Keratinocyte (primary cell): ENCODE measurements at regions of chr9 and their contacts with region 1.

Region 1: GRCh38 chr9:110714314-110714713 is 45.7 kb downstream of the MUSK start:
- DNase-seq: no peak
- H3K4me3 ChIP-seq: no peak overlapping the region
- H3K27ac ChIP-seq: no peak overlapping the region
- H3K4me1 ChIP-seq: no peaks in the 10 kb centered on the region
- H3K27me3 ChIP-seq: no peaks in the 10 kb centered on the region
- CTCF ChIP-seq: no peak

Region 2: DNA sequence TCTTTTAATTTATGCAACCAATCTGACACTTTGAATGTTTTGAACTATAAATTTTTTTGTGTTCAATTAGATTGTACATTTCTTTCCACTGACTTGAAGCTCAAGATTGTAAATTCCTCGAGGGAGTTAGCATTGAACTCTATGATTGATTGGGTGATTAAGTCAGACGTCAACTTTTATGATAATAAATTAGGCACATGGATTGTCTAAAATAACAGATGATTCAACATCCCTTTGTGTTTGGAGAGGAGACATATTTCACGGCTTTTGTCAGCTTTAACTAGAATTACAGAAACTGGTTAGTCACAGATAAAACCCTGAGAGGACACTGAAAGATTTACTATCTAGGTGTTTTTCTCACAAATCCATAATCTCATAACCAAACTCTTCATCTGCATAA is 344.0 kb before region 1 on chr9:
- dilution Hi-C with region 1: no loop called
- DNase-seq: peak; percentile 15
- H3K4me3 ChIP-seq: no peak overlapping the region
- H3K27ac ChIP-seq: peak overlapping the region; percentile 49
- H3K4me1 ChIP-seq: peaks cover 19% of the 10 kb centered on the region
- H3K27me3 ChIP-seq: no peaks in the 10 kb centered on the region
- CTCF ChIP-seq: no peak

Region 3: GRCh38 chr9:110808599-110808980 is 94.3 kb after region 1 on chr9:
- dilution Hi-C with region 1: loop called (anchors 25 kb)
- DNase-seq: no peak
- H3K4me3 ChIP-seq: no peak overlapping the region
- H3K27ac ChIP-seq: no peak overlapping the region
- H3K4me1 ChIP-seq: peaks cover 2% of the 10 kb centered on the region
- H3K27me3 ChIP-seq: no peaks in the 10 kb centered on the region
- CTCF ChIP-seq: no peak